ENCODE measurements at regions of chr4 and their contacts with region 1.

Region 1: DNA sequence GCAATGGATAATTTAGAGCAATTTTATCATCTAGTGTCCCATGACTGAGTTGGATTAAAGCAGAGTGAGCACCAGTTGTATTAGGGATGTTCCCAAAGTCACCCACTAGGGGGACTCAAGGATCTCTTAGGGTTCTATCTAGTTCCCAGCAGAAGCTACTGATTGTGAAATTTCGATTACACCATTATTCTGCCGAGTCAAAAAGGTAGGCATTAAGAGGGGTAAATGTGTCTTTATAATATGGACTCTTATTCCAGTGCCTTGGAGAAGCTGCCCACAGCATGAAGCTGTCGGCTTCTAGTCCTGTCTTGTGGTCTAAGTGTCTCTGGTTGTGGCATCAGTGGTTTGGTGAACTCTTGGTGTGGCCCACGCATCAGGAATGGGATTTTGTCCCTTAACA is 53.3 kb downstream of the RGS12 start:
- DNase-seq: peak; percentile 79
- H3K4me3 ChIP-seq: no peak overlapping the region
- H3K27ac ChIP-seq: no peak overlapping the region
- H3K4me1 ChIP-seq: peaks cover 7% of the 10 kb centered on the region
- CTCF ChIP-seq: peak; percentile 96

Region 2: DNA sequence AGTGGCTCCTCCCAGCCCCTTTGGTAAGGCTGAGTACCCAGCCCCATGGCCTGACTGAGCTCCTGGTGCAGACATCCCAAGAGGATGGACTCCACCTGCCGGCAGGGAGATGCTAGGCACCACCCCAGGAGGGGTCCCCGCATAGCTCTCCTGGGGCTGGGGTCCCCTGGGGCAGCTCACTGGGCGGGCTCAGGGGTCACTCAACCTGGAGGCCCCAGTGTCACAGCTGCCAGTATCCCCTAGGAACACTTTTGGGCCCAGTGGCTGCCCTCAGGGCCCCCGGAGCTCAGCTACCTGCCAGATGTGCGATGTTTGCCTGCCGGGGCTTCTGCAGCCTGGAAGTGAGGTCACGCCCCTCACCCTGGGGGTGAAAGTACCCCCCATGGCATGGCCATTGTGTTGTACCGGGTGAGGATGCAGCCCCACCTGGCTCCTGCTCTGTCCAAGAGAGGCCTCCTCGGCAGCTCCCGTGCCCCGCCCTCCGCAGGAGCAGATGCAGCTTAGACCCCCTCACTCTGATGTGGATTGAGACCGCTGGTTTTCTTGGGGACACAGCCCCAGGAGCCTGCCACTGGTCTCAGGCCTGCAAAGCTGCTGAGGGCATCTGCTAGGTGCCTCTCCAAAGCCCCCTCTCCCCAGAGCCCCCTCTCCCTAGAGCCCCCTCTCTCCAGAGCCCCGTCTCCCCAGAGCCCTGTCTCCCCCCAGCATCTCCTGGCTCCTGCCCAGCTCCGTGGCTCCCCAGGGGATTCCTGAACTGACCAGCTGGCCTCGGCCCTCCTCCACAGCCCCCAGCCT is 88.9 kb after region 1 on chr4:
- CTCF ChIA-PET with region 1: no interaction called
- POLR2A ChIA-PET with region 1: no interaction called
- intact Hi-C with region 1: loop called (anchors 2 kb)
- DNase-seq: peak; percentile 17
- H3K4me3 ChIP-seq: no peak overlapping the region
- H3K27ac ChIP-seq: no peak overlapping the region
- H3K4me1 ChIP-seq: no peaks in the 10 kb centered on the region
- CTCF ChIP-seq: peak; percentile 34; the same call in 1 of the 2 replicates

Region 3: DNA sequence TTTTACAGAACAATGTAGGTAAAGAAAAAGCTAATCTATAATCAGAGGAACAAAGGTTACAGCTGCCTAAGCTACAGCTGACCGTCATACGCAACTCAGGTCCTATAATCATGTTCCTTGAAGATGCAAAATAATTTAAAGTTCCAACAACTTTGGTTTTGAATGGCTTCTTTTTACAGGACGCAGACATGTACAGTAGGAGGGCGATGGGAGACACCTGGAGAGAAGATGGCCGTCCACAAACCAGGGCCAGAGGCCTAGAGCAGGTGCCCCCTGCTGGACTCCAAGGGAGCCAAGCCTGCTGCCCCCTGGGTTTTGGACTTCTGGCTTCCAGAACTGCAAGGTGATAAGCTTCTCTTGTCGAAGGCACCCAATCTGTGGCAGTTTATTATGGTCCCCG is 106.2 kb after region 1 on chr4:
- CTCF ChIA-PET with region 1: no interaction called
- POLR2A ChIA-PET with region 1: no interaction called
- intact Hi-C with region 1: no loop called
- DNase-seq: no peak
- H3K4me3 ChIP-seq: no peak overlapping the region
- H3K27ac ChIP-seq: no peak overlapping the region
- H3K4me1 ChIP-seq: no peaks in the 10 kb centered on the region
- CTCF ChIP-seq: peak; percentile 32; the same call in 1 of the 2 replicates

Region 4: GRCh38 chr4:3480528-3481112 is 134.5 kb after region 1 on chr4:
- CTCF ChIA-PET with region 1: interaction called, 3 read pairs
- POLR2A ChIA-PET with region 1: no interaction called
- intact Hi-C with region 1: loop called (anchors 1 kb)
- DNase-seq: peak; percentile 66
- H3K4me3 ChIP-seq: no peak overlapping the region
- H3K27ac ChIP-seq: no peak overlapping the region
- H3K4me1 ChIP-seq: peaks cover 14% of the 10 kb centered on the region
- CTCF ChIP-seq: peak; percentile 90